ENCODE measurements at regions of chr2 and their contacts with region 1.

Region 1: DNA sequence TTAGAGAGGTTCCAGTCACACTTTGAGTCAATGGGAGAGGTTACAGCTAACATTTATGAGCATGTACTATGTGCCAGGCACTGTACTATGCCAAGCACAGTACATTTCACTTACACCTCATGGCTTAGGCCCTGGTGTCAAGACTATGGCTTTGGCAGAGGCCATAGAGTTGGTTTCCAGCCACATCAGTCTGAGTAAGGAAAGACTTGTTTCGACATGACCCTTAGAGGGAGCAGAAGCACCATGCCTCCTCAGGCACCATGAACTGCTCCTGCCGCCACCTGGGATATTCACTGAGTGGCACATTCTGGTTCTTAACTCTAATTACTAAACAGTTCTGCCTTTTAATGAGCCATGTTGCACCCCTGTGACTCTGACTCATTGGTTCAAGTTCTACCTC is 12.7 kb downstream of the DGUOK start:
- DNase-seq: peak; percentile 21
- ATAC-seq: no peak; the same call in 1 of the 2 replicates
- H3K4me3 ChIP-seq: no peak overlapping the region
- H3K27ac ChIP-seq: peak overlapping the region; percentile 33; the same call in 1 of the 2 replicates
- H3K4me1 ChIP-seq: peaks cover 23% of the 10 kb centered on the region
- H3K27me3 ChIP-seq: no peaks in the 10 kb centered on the region
- CTCF ChIP-seq: peak; percentile 30; the same call in 1 of the 2 replicates

Region 2: DNA sequence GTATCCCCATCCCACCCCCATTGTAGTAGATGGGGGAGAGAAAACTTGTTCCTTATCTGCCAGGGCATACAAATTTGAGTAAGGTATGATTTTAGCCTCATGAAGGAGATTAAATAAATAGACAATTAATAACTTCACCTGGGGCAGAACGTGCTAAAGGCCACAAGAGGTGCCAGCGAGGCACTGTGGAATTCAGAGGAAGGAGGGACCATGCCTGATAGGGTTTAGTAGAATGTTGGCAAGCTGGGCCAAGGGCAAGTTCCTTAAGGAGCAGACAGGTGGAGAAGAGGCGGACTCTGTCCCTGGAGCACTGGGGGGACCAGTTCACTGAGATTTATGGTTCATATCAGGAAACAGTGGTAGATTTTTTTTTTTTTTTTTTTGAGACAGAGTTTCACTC is 88.1 kb before region 1 on chr2:
- CTCF ChIA-PET with region 1: no interaction called
- POLR2A ChIA-PET with region 1: no interaction called
- intact Hi-C with region 1: loop called (anchors 5 kb)
- DNase-seq: peak; percentile 42
- ATAC-seq: peak; percentile 55
- H3K4me3 ChIP-seq: no peak overlapping the region
- H3K27ac ChIP-seq: no peak overlapping the region
- H3K4me1 ChIP-seq: peaks cover 18% of the 10 kb centered on the region
- H3K27me3 ChIP-seq: no peaks in the 10 kb centered on the region
- CTCF ChIP-seq: peak; percentile 52; the same call in 1 of the 2 replicates

Region 3: GRCh38 chr2:73984203-73984921 is 44.9 kb after region 1 on chr2 and contains the start of gene TET3:
- CTCF ChIA-PET with region 1: interaction called, 4 read pairs
- POLR2A ChIA-PET with region 1: no interaction called
- intact Hi-C with region 1: loop called (anchors 5 kb)
- DNase-seq: peak; percentile 37
- ATAC-seq: peak; percentile 2; the same call in 1 of the 2 replicates
- H3K4me3 ChIP-seq: peak within 1 kb of the TSS; percentile 81
- H3K27ac ChIP-seq: peak within 1 kb of the TSS; percentile 98
- H3K4me1 ChIP-seq: peaks cover 78% of the 10 kb centered on the region
- H3K27me3 ChIP-seq: no peaks in the 10 kb centered on the region
- CTCF ChIP-seq: no peak
- total RNA-seq, gene TET3: 6.1 and 10.1 TPM in 2 replicates